Activated CD4-positive, alpha-beta T cell treated with anti-CD3 and anti-CD28 coated beads for 36 hours (primary cell): ENCODE measurements at regions of chr5 and their contacts with region 1.

Region 1: GRCh38 chr5:15003511-15003920 is 131.9 kb upstream of the ANKH start:
- DNase-seq: peak; percentile 70
- ATAC-seq: peak; percentile 91
- H3K4me3 Mint-ChIP-seq: no peak overlapping the region
- H3K27ac Mint-ChIP-seq: no peak overlapping the region
- H3K4me1 Mint-ChIP-seq: peaks cover 6% of the 10 kb centered on the region
- H3K27me3 Mint-ChIP-seq: no peaks in the 10 kb centered on the region

Region 2: DNA sequence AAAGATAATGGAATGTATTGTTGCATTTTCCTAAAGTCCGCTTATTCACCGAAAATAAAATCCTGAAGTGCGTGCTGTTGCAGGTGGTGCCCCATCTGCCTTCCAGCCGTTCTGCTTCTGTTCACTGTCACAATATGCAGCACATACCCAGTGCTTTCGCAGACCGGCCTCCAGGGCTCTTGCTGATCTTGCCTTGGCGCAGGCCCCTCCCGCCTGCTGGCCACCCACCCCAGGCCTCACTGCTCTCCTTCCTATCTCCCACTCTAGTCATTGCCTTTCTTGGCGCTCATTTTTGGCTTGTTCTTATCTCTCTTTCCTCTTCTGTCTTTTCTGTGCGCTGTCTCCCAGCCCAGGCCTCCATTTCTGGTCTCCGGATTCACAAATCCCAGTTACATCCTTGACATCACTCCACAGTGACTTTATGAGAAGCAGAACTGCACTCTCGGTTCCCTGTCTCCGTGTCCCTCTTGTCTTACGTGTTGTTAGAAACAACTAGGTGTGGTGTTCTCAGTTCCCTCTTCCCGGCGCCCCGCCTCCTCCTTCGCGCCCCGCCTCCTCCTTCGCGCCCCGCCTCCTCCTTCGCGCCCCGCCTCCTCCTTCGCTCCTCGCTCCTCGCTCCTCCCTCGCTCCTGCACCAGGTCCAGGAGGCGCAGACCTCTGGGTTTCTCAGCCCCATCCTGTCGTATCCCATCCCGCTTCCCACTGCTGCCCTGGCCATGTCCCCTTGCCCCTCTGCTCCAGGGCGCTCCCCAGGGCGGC is 623.6 kb before region 1 on chr5:
- CTCF ChIA-PET with region 1: no interaction called
- POLR2A ChIA-PET with region 1: no interaction called
- intact Hi-C with region 1: loop called in 1 of 2 experiments (anchors 10 kb)
- DNase-seq: no peak
- ATAC-seq: no peak
- H3K4me3 Mint-ChIP-seq: no peak overlapping the region
- H3K27ac Mint-ChIP-seq: no peak overlapping the region
- H3K4me1 Mint-ChIP-seq: no peaks in the 10 kb centered on the region
- H3K27me3 Mint-ChIP-seq: no peaks in the 10 kb centered on the region

Region 3: GRCh38 chr5:14727428-14727865 is 276.1 kb before region 1 on chr5:
- CTCF ChIA-PET with region 1: interaction called, 85 read pairs
- POLR2A ChIA-PET with region 1: interaction called, 3 read pairs
- intact Hi-C with region 1: loop called (anchors 1 kb)
- DNase-seq: peak; percentile 87
- ATAC-seq: peak; percentile 51
- H3K4me3 Mint-ChIP-seq: no peak overlapping the region
- H3K27ac Mint-ChIP-seq: no peak overlapping the region
- H3K4me1 Mint-ChIP-seq: peaks cover 15% of the 10 kb centered on the region
- H3K27me3 Mint-ChIP-seq: no peaks in the 10 kb centered on the region

Region 4: GRCh38 chr5:14956413-14957046 is 47.0 kb before region 1 on chr5:
- CTCF ChIA-PET with region 1: interaction called, 9 read pairs
- POLR2A ChIA-PET with region 1: no interaction called
- intact Hi-C with region 1: loop called (anchors 1 kb)
- DNase-seq: no peak
- ATAC-seq: no peak
- H3K4me3 Mint-ChIP-seq: no peak overlapping the region
- H3K27ac Mint-ChIP-seq: no peak overlapping the region
- H3K4me1 Mint-ChIP-seq: peaks cover 2% of the 10 kb centered on the region
- H3K27me3 Mint-ChIP-seq: no peaks in the 10 kb centered on the region

Region 5: GRCh38 chr5:15013654-15014463 is 10.3 kb after region 1 on chr5:
- CTCF ChIA-PET with region 1: interaction called, 19 read pairs
- POLR2A ChIA-PET with region 1: no interaction called
- intact Hi-C with region 1: no loop called
- DNase-seq: no peak
- ATAC-seq: no peak
- H3K4me3 Mint-ChIP-seq: no peak overlapping the region
- H3K27ac Mint-ChIP-seq: no peak overlapping the region
- H3K4me1 Mint-ChIP-seq: no peaks in the 10 kb centered on the region
- H3K27me3 Mint-ChIP-seq: no peaks in the 10 kb centered on the region

Region 6: DNA sequence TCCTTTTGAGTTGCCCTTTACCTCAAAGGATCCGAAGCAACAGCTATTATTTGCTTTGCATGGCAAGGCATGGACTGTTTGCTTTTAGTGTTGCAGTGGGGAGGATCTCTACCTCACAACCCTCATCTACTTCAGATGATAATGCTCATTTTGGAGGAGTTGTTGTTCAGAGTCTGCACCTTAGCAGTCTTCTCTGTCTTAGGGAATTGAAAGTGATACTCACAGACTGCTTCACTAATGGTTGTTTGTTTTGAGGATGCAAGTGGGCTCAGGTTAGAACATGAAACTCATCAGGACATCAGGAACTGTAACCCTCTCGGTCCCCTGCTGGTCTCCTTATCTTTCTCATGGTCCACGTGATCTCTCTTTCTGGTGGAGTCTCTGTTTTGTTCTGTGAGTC is 41.0 kb after region 1 on chr5:
- CTCF ChIA-PET with region 1: no interaction called
- POLR2A ChIA-PET with region 1: no interaction called
- intact Hi-C with region 1: no loop called
- DNase-seq: no peak
- ATAC-seq: no peak
- H3K4me3 Mint-ChIP-seq: no peak overlapping the region
- H3K27ac Mint-ChIP-seq: no peak overlapping the region
- H3K4me1 Mint-ChIP-seq: no peaks in the 10 kb centered on the region
- H3K27me3 Mint-ChIP-seq: peaks cover 3% of the 10 kb centered on the region

Region 7: GRCh38 chr5:15620501-15620900 is 617.0 kb after region 1 on chr5:
- CTCF ChIA-PET with region 1: no interaction called
- POLR2A ChIA-PET with region 1: no interaction called
- intact Hi-C with region 1: no loop called
- DNase-seq: no peak
- ATAC-seq: no peak
- H3K4me3 Mint-ChIP-seq: no peak overlapping the region
- H3K27ac Mint-ChIP-seq: no peak overlapping the region
- H3K4me1 Mint-ChIP-seq: no peaks in the 10 kb centered on the region
- H3K27me3 Mint-ChIP-seq: no peaks in the 10 kb centered on the region